WTC11 (cell line): ENCODE measurements at regions of chr20 and their contacts with region 1.

Region 1: GRCh38 chr20:36377352-36378326 is 71.5 kb downstream of the DLGAP4 start:
- DNase-seq: no peak
- ATAC-seq: peak; percentile 74
- H3K4me3 Mint-ChIP-seq: no peak overlapping the region
- H3K27ac Mint-ChIP-seq: no peak overlapping the region
- H3K4me1 Mint-ChIP-seq: no peaks in the 10 kb centered on the region
- H3K27me3 Mint-ChIP-seq: no peaks in the 10 kb centered on the region; the same call in 1 of the 2 replicates
- CTCF ChIP-seq: no peak

Region 2: DNA sequence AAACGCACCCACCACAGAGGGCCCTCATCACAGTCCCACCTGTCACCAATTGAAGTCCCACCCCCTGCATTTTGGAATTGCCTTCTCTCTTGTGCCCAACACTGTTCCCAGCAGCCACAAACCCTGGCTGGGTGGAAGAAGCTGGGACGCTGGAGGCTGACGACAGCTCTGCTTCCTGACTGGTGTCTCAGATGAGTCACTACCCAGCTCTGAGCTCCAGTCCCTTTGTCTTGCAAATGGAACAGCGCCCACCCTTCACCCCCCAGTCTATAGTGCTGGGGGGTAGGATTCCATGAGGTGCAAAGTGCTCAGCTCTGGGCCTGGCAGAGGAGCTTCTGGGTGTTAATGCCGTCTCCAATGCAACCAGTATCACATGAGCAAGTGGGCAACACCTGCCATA is 13.8 kb after region 1 on chr20:
- CTCF ChIA-PET with region 1: interaction called, 14 read pairs
- POLR2A ChIA-PET with region 1: no interaction called
- DNase-seq: peak; percentile 43
- ATAC-seq: peak; percentile 78
- H3K4me3 Mint-ChIP-seq: peak overlapping the region; percentile 24; the same call in 1 of the 2 replicates
- H3K27ac Mint-ChIP-seq: peak overlapping the region; percentile 91
- H3K4me1 Mint-ChIP-seq: peaks cover 16% of the 10 kb centered on the region
- H3K27me3 Mint-ChIP-seq: no peaks in the 10 kb centered on the region
- CTCF ChIP-seq: no peak